Naive thymus-derived CD4-positive, alpha-beta T cell (primary cell): ENCODE measurements at regions of chr15 and their contacts with region 1.

Region 1: GRCh38 chr15:90101969-90102890 is at the start of gene IDH2:
- DNase-seq: peak; percentile 60 to 86 (median 74)
- ATAC-seq: peak; percentile 89
- H3K4me3 ChIP-seq: peak within 1 kb of the TSS; percentile 78
- H3K4me3 Mint-ChIP-seq: peak within 1 kb of the TSS; percentile 82 to 97 (median 92)
- H3K27ac ChIP-seq: peak within 1 kb of the TSS; percentile 90
- H3K27ac Mint-ChIP-seq: peak within 1 kb of the TSS; percentile 94 to 99 (median 98)
- H3K4me1 ChIP-seq: peaks cover 38 to 44% of the 10 kb centered on the region in 2 donors
- H3K4me1 Mint-ChIP-seq: peaks cover 43 to 60% (median 52%) of the 10 kb centered on the region in 7 donors
- H3K27me3 ChIP-seq: no peaks in the 10 kb centered on the region
- H3K27me3 Mint-ChIP-seq: peaks cover 0 to 24% (median 0%) of the 10 kb centered on the region in 5 donors
- total RNA-seq, gene IDH2: 32.4 to 230 (median 33.7) TPM

Region 2: GRCh38 chr15:89575146-89575655 is 527.0 kb before region 1 on chr15 and contains the start of gene TICRR:
- CTCF ChIA-PET with region 1: no interaction called
- POLR2A ChIA-PET with region 1: no interaction called
- intact Hi-C with region 1: loop called in 1 of 2 experiments (anchors 10 kb)
- DNase-seq: peak; percentile 69 to 98 (median 97)
- ATAC-seq: peak; percentile 99
- H3K4me3 ChIP-seq: peak within 1 kb of the TSS; percentile 86
- H3K4me3 Mint-ChIP-seq: peak within 1 kb of the TSS; percentile 77 to 96 (median 86)
- H3K27ac ChIP-seq: peak within 1 kb of the TSS; percentile 34
- H3K27ac Mint-ChIP-seq: peak within 1 kb of the TSS; percentile 52 to 87 (median 74)
- H3K4me1 ChIP-seq: no peaks in the 10 kb centered on the region
- H3K4me1 Mint-ChIP-seq: peaks cover 0 to 38% (median 8%) of the 10 kb centered on the region in 7 donors
- H3K27me3 ChIP-seq: no peaks in the 10 kb centered on the region
- H3K27me3 Mint-ChIP-seq: peaks cover 9 to 25% (median 13%) of the 10 kb centered on the region in 5 donors
- total RNA-seq, gene TICRR: 0.11 to 15.5 (median 0.19) TPM

Region 3: GRCh38 chr15:89893696-89894455 is 208.4 kb before region 1 on chr15 and contains the start of gene AP3S2:
- CTCF ChIA-PET with region 1: no interaction called
- POLR2A ChIA-PET with region 1: interaction called, 10 read pairs
- intact Hi-C with region 1: loop called (anchors 1 kb)
- DNase-seq: peak; percentile 79 to 90 (median 86)
- ATAC-seq: peak; percentile 97
- H3K4me3 ChIP-seq: peak within 1 kb of the TSS; percentile 88
- H3K4me3 Mint-ChIP-seq: peak within 1 kb of the TSS; percentile 89 to 99 (median 96)
- H3K27ac ChIP-seq: peak within 1 kb of the TSS; percentile 81
- H3K27ac Mint-ChIP-seq: peak within 1 kb of the TSS; percentile 91 to 98 (median 95)
- H3K4me1 ChIP-seq: peaks cover 6 to 14% of the 10 kb centered on the region in 2 donors
- H3K4me1 Mint-ChIP-seq: peaks cover 17 to 46% (median 36%) of the 10 kb centered on the region in 7 donors
- H3K27me3 ChIP-seq: no peaks in the 10 kb centered on the region
- H3K27me3 Mint-ChIP-seq: no peaks in the 10 kb centered on the region
- total RNA-seq, gene AP3S2: 24.3 to 31.7 (median 28.4) TPM

Region 4: GRCh38 chr15:90086868-90087268 is 15.4 kb before region 1 on chr15:
- CTCF ChIA-PET with region 1: interaction called, 7 read pairs
- POLR2A ChIA-PET with region 1: interaction called, 4 read pairs
- intact Hi-C with region 1: loop called in 1 of 2 experiments (anchors 1 kb)
- DNase-seq: peak in 8 of 9 donors; percentile 17 to 57 (median 43)
- ATAC-seq: peak; percentile 83
- H3K4me3 ChIP-seq: no peak overlapping the region
- H3K4me3 Mint-ChIP-seq: no peak overlapping the region
- H3K27ac ChIP-seq: no peak overlapping the region
- H3K27ac Mint-ChIP-seq: peak overlapping the region; percentile 23 to 91 (median 72)
- H3K4me1 ChIP-seq: no peaks in the 10 kb centered on the region
- H3K4me1 Mint-ChIP-seq: peaks cover 0 to 21% (median 10%) of the 10 kb centered on the region in 7 donors
- H3K27me3 ChIP-seq: no peaks in the 10 kb centered on the region
- H3K27me3 Mint-ChIP-seq: no peaks in the 10 kb centered on the region

Region 5: GRCh38 chr15:90201130-90201949 is 99.1 kb after region 1 on chr15 and contains the start of gene SEMA4B:
- CTCF ChIA-PET with region 1: no interaction called
- POLR2A ChIA-PET with region 1: interaction called, 6 read pairs
- intact Hi-C with region 1: loop called in 1 of 2 experiments (anchors 5 kb)
- DNase-seq: peak; percentile 56 to 81 (median 70)
- ATAC-seq: peak; percentile 92
- H3K4me3 ChIP-seq: peak within 1 kb of the TSS; percentile 67
- H3K4me3 Mint-ChIP-seq: peak within 1 kb of the TSS; percentile 84 to 96 (median 89)
- H3K27ac ChIP-seq: peak within 1 kb of the TSS; percentile 85
- H3K27ac Mint-ChIP-seq: peak within 1 kb of the TSS; percentile 66 to 90 (median 82)
- H3K4me1 ChIP-seq: peaks cover 11 to 23% of the 10 kb centered on the region in 2 donors
- H3K4me1 Mint-ChIP-seq: peaks cover 21 to 36% (median 25%) of the 10 kb centered on the region in 7 donors
- H3K27me3 ChIP-seq: no peaks in the 10 kb centered on the region
- H3K27me3 Mint-ChIP-seq: peaks cover 0 to 3% (median 0%) of the 10 kb centered on the region in 5 donors
- total RNA-seq, gene SEMA4B: 15.9 to 31.0 (median 20.7) TPM

Region 6: GRCh38 chr15:90708516-90708915 is 606.3 kb after region 1 on chr15:
- CTCF ChIA-PET with region 1: no interaction called
- POLR2A ChIA-PET with region 1: no interaction called
- intact Hi-C with region 1: no loop called
- DNase-seq: no peak
- ATAC-seq: no peak
- H3K4me3 ChIP-seq: no peak overlapping the region
- H3K4me3 Mint-ChIP-seq: no peak overlapping the region
- H3K27ac ChIP-seq: no peak overlapping the region
- H3K27ac Mint-ChIP-seq: no peak overlapping the region
- H3K4me1 ChIP-seq: peaks cover 0 to 7% of the 10 kb centered on the region in 2 donors
- H3K4me1 Mint-ChIP-seq: peaks cover 11 to 29% (median 20%) of the 10 kb centered on the region in 7 donors
- H3K27me3 ChIP-seq: no peaks in the 10 kb centered on the region
- H3K27me3 Mint-ChIP-seq: no peaks in the 10 kb centered on the region

Region 7: DNA sequence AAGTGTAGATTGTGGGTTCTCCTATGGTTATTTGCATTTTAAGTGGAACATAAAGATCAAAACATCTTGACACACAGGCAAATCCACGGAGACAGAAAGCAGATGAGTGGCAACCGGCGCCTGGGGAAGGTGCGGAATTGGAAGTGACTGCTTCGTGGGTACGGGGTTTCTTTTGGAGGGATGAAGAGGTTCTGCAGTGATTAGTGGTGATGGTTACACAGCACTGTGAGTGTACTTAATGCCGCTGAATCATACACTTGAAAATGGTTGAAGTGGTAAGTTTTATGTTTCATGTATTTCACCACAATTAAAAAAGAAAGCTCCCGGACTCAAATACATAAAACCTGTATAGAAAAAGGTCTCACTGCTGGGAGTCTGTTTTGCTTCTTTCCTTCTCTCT is 938.6 kb after region 1 on chr15:
- CTCF ChIA-PET with region 1: no interaction called
- POLR2A ChIA-PET with region 1: no interaction called
- intact Hi-C with region 1: no loop called
- DNase-seq: no peak
- ATAC-seq: no peak
- H3K4me3 ChIP-seq: no peak overlapping the region
- H3K4me3 Mint-ChIP-seq: no peak overlapping the region
- H3K27ac ChIP-seq: no peak overlapping the region
- H3K27ac Mint-ChIP-seq: no peak overlapping the region
- H3K4me1 ChIP-seq: no peaks in the 10 kb centered on the region
- H3K4me1 Mint-ChIP-seq: peaks cover 0 to 10% (median 0%) of the 10 kb centered on the region in 7 donors
- H3K27me3 ChIP-seq: no peaks in the 10 kb centered on the region
- H3K27me3 Mint-ChIP-seq: peaks cover 0 to 12% (median 0%) of the 10 kb centered on the region in 5 donors